KBM-7 (cell line): ENCODE measurements at regions of chr13 and their contacts with region 1.

Region 1: GRCh38 chr13:27374650-27375049 is 49.8 kb upstream of the GTF3A start:
- DNase-seq: peak; percentile 77

Region 2: DNA sequence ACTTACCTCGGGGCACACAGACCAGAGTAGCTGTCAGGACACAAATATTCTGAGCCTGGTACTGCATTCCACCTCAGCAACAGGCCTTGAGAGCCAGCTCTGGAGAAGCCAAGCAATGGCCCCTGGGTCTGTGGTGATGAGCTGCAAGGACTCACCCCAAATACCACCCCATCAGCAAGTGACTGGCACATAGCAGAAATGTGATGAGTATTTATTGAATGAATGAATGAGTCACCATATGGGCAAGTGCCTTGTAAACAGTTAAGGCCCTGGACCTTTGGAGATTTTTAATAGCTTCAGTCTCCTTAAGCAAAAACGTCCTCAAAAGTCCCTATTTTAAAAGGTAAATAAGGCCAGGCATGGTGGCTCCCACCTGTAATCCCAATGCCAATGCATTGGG is 435.8 kb after region 1 on chr13:
- in situ Hi-C with region 1: loop called (anchors 10 kb)
- DNase-seq: no peak

Region 3: GRCh38 chr13:27997904-27998522 is 623.4 kb after region 1 on chr13:
- in situ Hi-C with region 1: loop called (anchors 25 kb)
- DNase-seq: peak; percentile 79